Naive thymus-derived CD4-positive, alpha-beta T cell (primary cell): ENCODE measurements at regions of chr14 and their contacts with region 1.

Region 1: DNA sequence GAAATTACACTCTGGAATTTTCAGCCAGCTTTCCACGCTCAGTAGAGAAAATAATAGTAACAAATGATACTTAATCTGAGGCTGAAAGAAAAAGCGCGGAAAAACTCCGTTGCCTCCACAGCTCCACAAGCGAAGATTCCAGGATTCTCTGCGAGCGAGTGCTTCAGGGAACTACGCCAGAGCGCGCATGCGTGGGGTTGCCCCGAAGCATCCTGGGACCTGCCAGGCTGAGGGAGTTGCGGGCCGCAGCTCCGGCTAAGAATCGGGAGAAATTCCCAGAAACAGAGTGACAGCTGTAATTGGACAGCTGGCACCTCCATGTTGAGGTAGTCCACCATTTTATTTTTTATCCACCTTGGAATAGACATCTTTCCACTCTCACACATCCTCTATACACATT is 12.0 kb upstream of the TTC5 start:
- DNase-seq: no peak
- ATAC-seq: no peak
- H3K4me3 ChIP-seq: no peak overlapping the region
- H3K4me3 Mint-ChIP-seq: no peak overlapping the region
- H3K27ac ChIP-seq: no peak overlapping the region
- H3K27ac Mint-ChIP-seq: no peak overlapping the region
- H3K4me1 ChIP-seq: no peaks in the 10 kb centered on the region
- H3K4me1 Mint-ChIP-seq: peaks cover 0 to 4% (median 0%) of the 10 kb centered on the region in 7 donors
- H3K27me3 ChIP-seq: no peaks in the 10 kb centered on the region
- H3K27me3 Mint-ChIP-seq: no peaks in the 10 kb centered on the region

Region 2: DNA sequence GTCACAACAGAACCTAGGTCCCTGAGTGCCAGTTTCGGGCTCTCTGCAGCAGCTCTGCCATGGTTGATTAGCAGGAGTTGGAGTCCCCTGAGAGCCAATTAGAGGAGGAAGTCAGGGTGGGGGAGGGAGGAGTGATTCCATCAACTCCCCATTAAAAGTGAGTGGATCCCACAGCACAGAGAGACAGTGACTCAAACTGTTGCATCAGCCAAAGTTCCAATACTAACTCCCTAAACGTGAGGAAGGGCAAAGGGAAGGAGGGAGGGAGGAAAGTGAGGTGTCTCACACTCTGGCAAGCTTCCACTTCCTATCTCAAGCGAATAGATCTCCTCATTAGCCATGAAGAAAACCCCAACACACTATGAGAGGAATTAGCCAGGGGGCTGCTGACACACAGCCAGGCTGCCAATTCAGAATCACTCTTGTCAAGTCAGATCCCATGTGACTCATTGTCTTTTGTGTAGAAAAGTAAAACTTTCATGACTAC is 55.0 kb before region 1 on chr14:
- CTCF ChIA-PET with region 1: no interaction called
- POLR2A ChIA-PET with region 1: no interaction called
- intact Hi-C with region 1: no loop called
- DNase-seq: no peak
- ATAC-seq: no peak
- H3K4me3 ChIP-seq: no peak overlapping the region
- H3K4me3 Mint-ChIP-seq: no peak overlapping the region
- H3K27ac ChIP-seq: no peak overlapping the region
- H3K27ac Mint-ChIP-seq: no peak overlapping the region
- H3K4me1 ChIP-seq: no peaks in the 10 kb centered on the region
- H3K4me1 Mint-ChIP-seq: no peaks in the 10 kb centered on the region
- H3K27me3 ChIP-seq: no peaks in the 10 kb centered on the region
- H3K27me3 Mint-ChIP-seq: no peaks in the 10 kb centered on the region

Region 3: GRCh38 chr14:20305265-20306078 is 12.2 kb before region 1 on chr14 and contains the start of gene TTC5:
- CTCF ChIA-PET with region 1: no interaction called
- POLR2A ChIA-PET with region 1: interaction called, 10 read pairs
- intact Hi-C with region 1: no loop called
- DNase-seq: peak; percentile 82 to 96 (median 89)
- ATAC-seq: peak; percentile 100
- H3K4me3 ChIP-seq: peak within 1 kb of the TSS; percentile 64
- H3K4me3 Mint-ChIP-seq: peak within 1 kb of the TSS; percentile 88 to 99 (median 94)
- H3K27ac ChIP-seq: peak within 1 kb of the TSS; percentile 75
- H3K27ac Mint-ChIP-seq: peak within 1 kb of the TSS; percentile 78 to 95 (median 90)
- H3K4me1 ChIP-seq: peaks cover 9 to 14% of the 10 kb centered on the region in 2 donors
- H3K4me1 Mint-ChIP-seq: peaks cover 22 to 44% (median 38%) of the 10 kb centered on the region in 7 donors
- H3K27me3 ChIP-seq: no peaks in the 10 kb centered on the region
- H3K27me3 Mint-ChIP-seq: no peaks in the 10 kb centered on the region
- total RNA-seq, gene TTC5: 16.4 to 30.1 (median 20.3) TPM